ENCODE measurements at regions of chr12 and their contacts with region 1.

Region 1: DNA sequence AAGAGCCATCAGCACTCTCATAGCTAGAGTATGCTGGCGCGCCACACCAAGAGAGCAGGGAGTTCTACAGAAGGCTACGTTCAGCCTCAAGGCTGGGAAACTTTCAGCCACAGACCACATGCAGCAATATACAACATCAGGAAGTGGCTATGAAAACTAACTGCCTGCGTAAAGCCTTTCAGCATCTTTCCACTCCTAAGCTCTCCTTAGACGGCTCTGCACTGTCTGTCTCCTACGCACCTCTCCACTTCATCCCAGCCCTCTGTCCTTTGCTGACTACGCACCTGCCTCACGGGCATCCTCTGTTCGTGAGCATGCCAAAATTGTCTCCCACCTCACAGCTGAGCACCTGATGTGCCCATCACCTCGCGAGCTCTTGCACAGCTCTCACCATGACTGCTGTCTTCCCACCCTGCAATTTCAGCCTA is 9.7 kb downstream of the MPHOSPH9 start:
- DNase-seq: peak in 1 of 2 donors; percentile 35
- H3K4me3 ChIP-seq: no peak overlapping the region
- H3K27ac ChIP-seq: peak overlapping the region in 2 of 5 donors; percentile 17 to 56
- H3K4me1 ChIP-seq: peaks cover 0 to 1% (median 0%) of the 10 kb centered on the region in 4 donors
- H3K27me3 ChIP-seq: no peaks in the 10 kb centered on the region
- CTCF ChIP-seq: no peak
- EP300 ChIP-seq: no peak
- POLR2A ChIP-seq: no peak

Region 2: DNA sequence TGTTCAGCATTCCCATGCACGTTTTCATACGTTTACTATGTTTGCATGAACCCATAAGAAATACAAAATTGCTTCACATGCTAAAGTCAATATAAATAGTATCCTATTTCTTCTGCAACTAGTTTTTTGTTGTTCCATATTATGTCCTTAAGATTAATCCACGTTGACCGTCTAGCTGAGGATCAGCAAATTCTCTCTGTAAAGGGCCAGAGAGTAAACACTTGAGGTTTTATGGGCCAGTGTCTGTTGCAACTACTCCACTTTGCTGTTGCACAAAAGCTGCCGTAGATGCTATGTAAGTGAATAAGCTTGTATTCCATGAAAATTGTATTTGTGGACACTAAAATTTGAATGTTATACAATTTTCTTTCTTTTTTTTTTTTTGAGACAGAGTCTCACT is 51.3 kb before region 1 on chr12:
- intact Hi-C with region 1: loop called (anchors 10 kb)
- DNase-seq: no peak
- H3K4me3 ChIP-seq: no peak overlapping the region
- H3K27ac ChIP-seq: no peak overlapping the region
- H3K4me1 ChIP-seq: no peaks in the 10 kb centered on the region
- H3K27me3 ChIP-seq: no peaks in the 10 kb centered on the region
- CTCF ChIP-seq: no peak
- EP300 ChIP-seq: no peak
- POLR2A ChIP-seq: no peak

Region 3: GRCh38 chr12:123264681-123265438 is 41.6 kb after region 1 on chr12:
- intact Hi-C with region 1: no loop called
- DNase-seq: no peak
- H3K4me3 ChIP-seq: no peak overlapping the region
- H3K27ac ChIP-seq: no peak overlapping the region
- H3K4me1 ChIP-seq: peaks cover 22 to 33% (median 27%) of the 10 kb centered on the region in 4 donors
- H3K27me3 ChIP-seq: no peaks in the 10 kb centered on the region
- CTCF ChIP-seq: no peak
- EP300 ChIP-seq: no peak
- POLR2A ChIP-seq: no peak

Region 4: GRCh38 chr12:123365025-123365917 is 142.0 kb after region 1 on chr12:
- intact Hi-C with region 1: no loop called
- DNase-seq: peak; percentile 99 to 100
- H3K4me3 ChIP-seq: peak overlapping the region; percentile 67 to 98 (median 90)
- H3K27ac ChIP-seq: peak overlapping the region; percentile 91 to 99 (median 97)
- H3K4me1 ChIP-seq: peaks cover 16 to 46% (median 30%) of the 10 kb centered on the region in 4 donors
- H3K27me3 ChIP-seq: no peaks in the 10 kb centered on the region
- CTCF ChIP-seq: peak in 5 of 7 experiments; percentile 45 to 74 (median 65)
- EP300 ChIP-seq: no peak
- POLR2A ChIP-seq: peak in 1 of 4 donors; percentile 48

Measured in stomach (tissue), 19 donors.